Posterior vena cava (tissue), 2 donors: ENCODE measurements at regions of chr10 and their contacts with region 1.

Region 1: GRCh38 chr10:96229568-96230030 is 41.8 kb downstream of the BLNK start:
- DNase-seq: peak; percentile 91

Region 2: DNA sequence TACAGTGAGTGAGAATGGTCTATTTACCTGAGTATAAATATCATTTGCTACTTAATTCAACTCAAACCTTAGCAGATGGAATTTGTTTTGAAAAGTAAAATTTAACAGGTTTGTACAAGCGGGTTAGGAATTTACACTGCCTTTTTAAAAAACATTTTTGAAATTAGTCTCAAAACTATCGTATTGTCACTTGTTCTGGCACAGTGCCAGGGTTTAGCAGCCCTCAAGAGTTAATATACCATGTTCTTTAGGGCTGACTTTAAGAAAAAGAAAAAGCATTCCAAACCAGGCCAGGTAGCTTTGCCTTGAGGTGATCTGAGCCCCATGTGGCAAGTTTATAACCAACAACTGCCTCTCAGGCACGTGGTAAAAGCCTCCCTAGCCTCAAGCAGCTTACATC is 168.4 kb before region 1 on chr10:
- intact Hi-C with region 1: loop called in 1 of 2 experiments (anchors 2 kb)
- DNase-seq: no peak

Region 3: GRCh38 chr10:96292971-96293920 is 63.6 kb after region 1 on chr10:
- intact Hi-C with region 1: loop called (anchors 5 kb)
- DNase-seq: no peak